ENCODE measurements at regions of chr7 and their contacts with region 1.

Region 1: DNA sequence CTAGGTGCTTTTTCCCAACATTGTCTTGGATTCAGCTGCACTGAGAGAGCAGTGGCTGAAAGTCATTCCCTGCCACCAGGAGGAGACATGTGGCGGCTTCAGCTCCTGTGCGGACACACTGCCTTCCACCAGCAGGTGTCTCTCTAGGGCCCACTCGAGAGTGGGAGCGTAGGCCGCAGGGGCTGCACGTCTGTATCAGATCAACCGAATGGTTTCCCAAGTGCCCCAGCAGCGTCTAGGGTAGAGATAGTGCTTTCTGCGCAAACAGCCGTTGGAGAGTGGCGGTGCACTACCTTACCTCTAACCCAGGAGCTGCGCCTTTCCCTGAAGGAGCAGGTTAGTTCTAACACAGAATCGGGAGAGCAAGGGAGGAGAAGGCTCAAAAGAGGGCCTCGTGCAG is 31.7 kb downstream of the PAPOLB start:
- DNase-seq: peak in 8 of 9 experiments; percentile 32 to 69 (median 61)
- ATAC-seq: peak; percentile 92
- H3K4me3 ChIP-seq: no peak overlapping the region
- H3K4me3 Mint-ChIP-seq: no peak overlapping the region
- H3K27ac ChIP-seq: no peak overlapping the region
- H3K27ac Mint-ChIP-seq: no peak overlapping the region
- H3K4me1 ChIP-seq: no peaks in the 10 kb centered on the region
- H3K4me1 Mint-ChIP-seq: peaks cover 4% of the 10 kb centered on the region
- H3K27me3 ChIP-seq: no peaks in the 10 kb centered on the region
- H3K27me3 Mint-ChIP-seq: no peaks in the 10 kb centered on the region
- CTCF ChIP-seq: peak; percentile 71

Region 2: DNA sequence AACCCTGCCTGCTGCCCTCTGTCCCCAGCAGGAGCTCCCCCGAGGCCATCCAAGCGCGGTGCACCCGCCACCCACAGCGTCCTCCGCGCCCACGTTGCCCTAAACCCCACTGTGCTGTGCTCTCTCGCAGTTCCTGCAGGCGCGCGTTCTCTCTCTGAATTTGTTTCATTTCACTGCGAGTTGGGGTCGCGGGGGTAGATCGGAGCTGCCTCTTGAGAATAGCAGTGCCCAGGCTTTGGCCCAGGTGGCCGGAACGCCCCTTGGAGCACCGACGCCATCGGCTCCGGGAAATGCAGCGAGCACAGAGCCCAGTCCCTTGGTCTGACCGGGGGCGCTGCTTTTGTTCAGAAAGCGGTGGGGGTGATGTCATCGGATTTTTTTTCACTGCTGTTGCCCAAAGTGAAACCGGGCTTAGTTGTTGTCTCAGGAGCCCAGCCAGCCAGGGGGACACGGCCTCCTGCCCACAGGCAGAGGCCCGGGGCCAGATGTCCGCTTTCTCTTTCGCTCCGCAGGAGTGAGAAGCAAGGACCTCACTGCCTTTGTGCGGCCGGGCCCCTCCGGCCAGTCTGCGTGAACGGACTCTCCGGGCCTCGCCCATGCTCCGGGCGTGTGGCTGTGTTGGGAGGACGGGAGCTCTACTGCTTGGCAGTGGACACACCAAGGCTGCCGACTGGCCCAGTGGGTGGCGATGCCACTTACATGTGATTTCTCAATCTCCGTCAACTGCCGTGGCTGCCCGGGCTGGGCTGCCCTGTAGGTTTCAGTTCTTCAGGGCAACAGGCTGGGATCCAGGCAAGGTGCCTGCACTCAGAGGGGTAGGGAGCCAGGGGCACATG is 104.9 kb before region 1 on chr7:
- CTCF ChIA-PET with region 1: no interaction called
- POLR2A ChIA-PET with region 1: no interaction called
- intact Hi-C with region 1: no loop called
- DNase-seq: peak in 8 of 9 experiments; percentile 30 to 84 (median 66)
- ATAC-seq: peak; percentile 81
- H3K4me3 ChIP-seq: peak overlapping the region; percentile 70 to 80
- H3K4me3 Mint-ChIP-seq: peak overlapping the region; percentile 95
- H3K27ac ChIP-seq: peak overlapping the region; percentile 91 to 94
- H3K27ac Mint-ChIP-seq: peak overlapping the region; percentile 99
- H3K4me1 ChIP-seq: peaks cover 54% of the 10 kb centered on the region
- H3K4me1 Mint-ChIP-seq: peaks cover 55% of the 10 kb centered on the region
- H3K27me3 ChIP-seq: no peaks in the 10 kb centered on the region
- H3K27me3 Mint-ChIP-seq: no peaks in the 10 kb centered on the region
- CTCF ChIP-seq: no peak

Region 3: DNA sequence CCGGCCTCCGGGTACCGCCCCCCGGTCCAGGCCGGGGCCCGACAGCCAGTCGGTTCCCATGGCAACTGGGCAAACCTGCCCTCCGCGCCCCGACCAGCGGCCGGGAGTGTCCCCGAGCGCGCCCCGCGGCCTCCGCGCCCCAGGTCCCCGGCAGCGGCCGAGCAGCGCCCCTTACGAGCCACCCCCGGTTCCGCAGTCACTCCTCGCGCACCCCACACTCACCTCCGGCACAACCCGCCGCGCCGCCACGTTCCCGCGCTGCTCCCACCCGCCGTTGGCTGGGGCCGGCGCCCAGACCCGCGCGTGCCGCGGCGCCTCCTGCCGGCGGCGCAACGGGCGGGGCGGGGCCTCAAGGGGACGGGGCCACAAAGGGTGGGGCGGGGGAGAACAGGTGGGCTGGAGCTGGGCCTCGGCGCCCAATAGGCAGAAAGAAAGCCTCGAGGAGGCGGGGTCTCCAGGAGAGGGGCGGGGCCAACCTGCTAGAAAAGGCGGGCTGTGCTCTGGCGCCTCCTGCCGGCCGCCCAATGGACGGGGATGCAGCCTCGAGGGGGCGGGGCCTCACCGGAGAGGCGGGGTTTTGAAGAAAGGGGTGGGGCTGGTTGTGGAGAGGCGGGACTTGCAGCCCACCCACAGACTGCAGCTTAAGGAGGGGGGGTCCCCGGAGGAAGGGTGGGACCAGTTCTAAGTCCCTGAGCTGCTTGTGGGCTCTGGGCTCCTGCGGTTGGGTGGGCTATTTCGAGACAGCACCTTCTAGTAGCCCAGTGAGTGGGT is 53.4 kb after region 1 on chr7 and contains the start of gene RADIL:
- CTCF ChIA-PET with region 1: interaction called, 4 read pairs
- POLR2A ChIA-PET with region 1: no interaction called
- intact Hi-C with region 1: loop called in 1 of 2 experiments (anchors 1 kb)
- DNase-seq: peak; percentile 60 to 90 (median 81)
- ATAC-seq: peak; percentile 98
- H3K4me3 ChIP-seq: peak within 1 kb of the TSS in 1 of 2 experiments; percentile 11
- H3K4me3 Mint-ChIP-seq: peak within 1 kb of the TSS; percentile 75
- H3K27ac ChIP-seq: no peak within 1 kb of the TSS
- H3K27ac Mint-ChIP-seq: no peak within 1 kb of the TSS
- H3K4me1 ChIP-seq: peaks cover 7% of the 10 kb centered on the region
- H3K4me1 Mint-ChIP-seq: peaks cover 10% of the 10 kb centered on the region
- H3K27me3 ChIP-seq: peaks cover 6 to 12% of the 10 kb centered on the region in 2 experiments
- H3K27me3 Mint-ChIP-seq: peaks cover 33% of the 10 kb centered on the region
- CTCF ChIP-seq: peak; percentile 60
- total RNA-seq, gene RADIL: not detected